ENCODE measurements at regions of chr13 and their contacts with region 1.

Region 1: DNA sequence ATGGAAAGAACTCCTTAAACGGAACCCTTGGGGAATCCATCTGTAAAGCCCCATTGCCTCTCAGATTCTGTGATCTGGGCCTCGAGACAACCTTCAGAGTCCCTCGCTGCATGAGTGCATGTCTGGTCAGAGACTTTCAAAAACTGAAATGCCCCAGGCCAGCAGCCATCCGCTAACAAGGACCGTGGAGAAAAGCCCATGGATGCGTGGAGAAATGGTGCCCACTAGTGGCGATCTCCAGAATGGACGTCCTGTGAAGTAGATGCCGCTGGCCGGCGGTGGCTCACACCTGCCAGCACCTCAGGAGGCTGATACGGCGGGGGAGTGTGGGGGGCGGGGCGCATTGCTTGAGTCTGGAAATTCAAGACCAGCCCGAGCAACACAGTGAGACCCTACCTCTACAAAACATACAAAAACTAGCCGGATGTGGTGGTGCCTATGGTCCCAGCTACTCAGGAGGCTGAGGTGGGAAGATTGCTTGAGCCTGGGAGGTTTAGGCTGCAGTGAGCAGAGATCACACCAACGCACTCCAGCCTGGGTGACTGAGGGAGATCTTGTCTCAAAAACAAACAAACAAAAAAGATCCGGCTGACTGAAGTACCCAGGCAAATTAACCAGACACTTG is 7.9 kb upstream of the CDC16 start:
- DNase-seq: peak; percentile 74
- ATAC-seq: peak; percentile 94
- H3K4me3 Mint-ChIP-seq: no peak overlapping the region
- H3K27ac Mint-ChIP-seq: no peak overlapping the region
- H3K4me1 Mint-ChIP-seq: peaks cover 19% of the 10 kb centered on the region
- H3K27me3 Mint-ChIP-seq: peaks cover 14% of the 10 kb centered on the region
- CTCF ChIP-seq: no peak

Region 2: DNA sequence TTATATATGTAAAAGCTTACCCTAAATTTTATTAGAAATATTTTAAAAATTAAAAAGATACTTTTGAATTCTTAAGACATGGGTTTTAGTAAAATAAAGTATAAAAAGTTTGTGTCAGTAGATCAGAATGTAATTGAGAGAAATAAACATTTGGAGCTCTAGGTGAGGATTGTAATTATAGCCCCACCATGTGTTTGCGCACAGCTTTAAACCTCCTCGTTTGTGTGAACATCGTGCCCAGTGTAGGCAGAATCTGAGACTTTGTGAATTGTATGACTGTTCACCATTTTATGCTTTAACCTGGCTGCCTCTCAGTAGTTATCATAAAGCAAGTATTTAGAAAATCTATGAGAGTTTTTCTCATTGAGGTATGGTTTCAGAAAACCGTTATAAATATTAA is 988.3 kb before region 1 on chr13:
- CTCF ChIA-PET with region 1: no interaction called
- POLR2A ChIA-PET with region 1: no interaction called
- intact Hi-C with region 1: no loop called
- DNase-seq: no peak
- ATAC-seq: no peak
- H3K4me3 Mint-ChIP-seq: no peak overlapping the region
- H3K27ac Mint-ChIP-seq: no peak overlapping the region
- H3K4me1 Mint-ChIP-seq: no peaks in the 10 kb centered on the region
- H3K27me3 Mint-ChIP-seq: no peaks in the 10 kb centered on the region
- CTCF ChIP-seq: no peak

Region 3: GRCh38 chr13:113863436-113864272 is 363.2 kb before region 1 on chr13 and contains the start of gene GAS6:
- CTCF ChIA-PET with region 1: no interaction called
- POLR2A ChIA-PET with region 1: no interaction called
- intact Hi-C with region 1: loop called (anchors 5 kb)
- DNase-seq: no peak
- ATAC-seq: peak; percentile 62
- H3K4me3 Mint-ChIP-seq: peak within 1 kb of the TSS; percentile 73
- H3K27ac Mint-ChIP-seq: no peak within 1 kb of the TSS
- H3K4me1 Mint-ChIP-seq: peaks cover 16% of the 10 kb centered on the region
- H3K27me3 Mint-ChIP-seq: peaks cover 35% of the 10 kb centered on the region
- CTCF ChIP-seq: no peak
- total RNA-seq, gene GAS6: 1.3 and 1.4 TPM in 2 replicates

Region 4: DNA sequence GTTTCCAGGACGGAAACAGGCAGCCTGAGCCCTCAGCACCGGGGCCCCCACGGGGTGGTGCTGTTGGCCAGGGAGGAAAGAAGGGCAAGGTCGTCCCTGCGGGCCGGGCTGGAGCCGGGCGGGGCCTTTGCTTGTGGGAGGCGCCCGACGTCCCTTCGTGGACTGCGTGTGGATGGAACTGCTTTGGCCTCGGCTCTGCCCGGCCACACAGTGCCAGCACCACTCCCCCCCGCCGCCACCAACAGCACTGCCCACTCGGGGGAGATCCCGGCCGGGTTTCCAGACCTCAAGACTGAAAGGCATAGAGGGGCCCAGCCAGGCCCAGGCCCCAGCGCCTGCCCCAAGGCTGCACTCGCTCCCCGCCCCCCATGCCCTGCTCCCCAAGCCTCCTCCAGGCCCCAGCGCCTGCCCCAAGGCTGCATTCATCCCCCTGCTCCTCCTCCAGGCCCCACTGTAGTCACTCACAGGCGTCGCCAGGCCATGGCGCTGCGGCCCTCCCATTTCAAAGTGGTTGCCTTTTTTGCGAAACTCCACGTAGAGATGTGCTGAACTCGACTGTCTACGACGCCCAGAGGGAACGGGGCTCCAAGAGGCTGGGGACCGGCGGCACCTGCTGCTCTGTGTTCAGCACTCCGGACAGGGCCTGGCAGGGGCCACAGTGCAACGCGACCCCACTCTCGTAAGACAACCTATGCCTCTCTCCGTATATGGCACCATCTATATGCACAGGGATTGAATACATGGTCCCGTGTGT is 275.4 kb before region 1 on chr13:
- CTCF ChIA-PET with region 1: interaction called, 14 read pairs
- POLR2A ChIA-PET with region 1: no interaction called
- intact Hi-C with region 1: loop called (anchors 1 kb)
- DNase-seq: peak; percentile 60
- ATAC-seq: peak; percentile 95
- H3K4me3 Mint-ChIP-seq: peak overlapping the region; percentile 32
- H3K27ac Mint-ChIP-seq: no peak overlapping the region
- H3K4me1 Mint-ChIP-seq: peaks cover 17% of the 10 kb centered on the region
- H3K27me3 Mint-ChIP-seq: no peaks in the 10 kb centered on the region
- CTCF ChIP-seq: peak; percentile 41

Region 5: DNA sequence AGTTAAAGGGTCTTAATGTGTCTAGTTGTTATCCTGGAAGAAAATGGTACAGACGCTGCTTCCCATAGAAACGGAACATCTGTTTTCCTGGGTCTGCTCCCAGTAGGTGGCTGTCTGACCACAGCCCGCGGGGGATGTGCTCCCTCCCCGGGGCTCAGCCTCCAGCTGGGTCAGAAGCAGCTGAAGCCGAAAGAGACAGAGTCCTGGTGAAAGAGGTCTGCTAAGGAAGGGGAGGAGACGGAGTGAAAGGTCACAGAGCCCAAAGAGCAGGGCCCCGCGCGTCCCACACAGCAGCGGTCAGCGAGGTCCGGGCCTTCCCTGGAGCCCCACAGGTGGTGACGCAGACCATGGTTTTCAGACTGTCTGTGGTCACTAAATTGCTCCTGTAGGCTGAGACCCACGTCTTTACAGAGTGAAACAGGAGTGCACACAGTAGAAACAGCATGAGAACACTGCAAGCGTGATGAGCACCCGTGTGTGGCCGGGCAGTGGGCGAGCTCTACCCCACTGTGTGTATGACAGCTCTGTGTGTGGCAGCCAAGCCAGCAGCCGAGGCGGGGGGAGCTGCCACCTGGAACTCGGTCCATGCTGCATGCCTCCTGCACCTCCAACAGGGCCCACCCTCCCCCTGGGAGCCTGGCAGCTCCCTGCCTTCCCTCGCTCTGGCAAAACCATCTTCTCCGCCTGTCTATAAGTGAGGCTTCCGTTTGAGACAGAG is 200.9 kb before region 1 on chr13:
- CTCF ChIA-PET with region 1: no interaction called
- POLR2A ChIA-PET with region 1: interaction called, 3 read pairs
- intact Hi-C with region 1: loop called (anchors 5 kb)
- DNase-seq: no peak
- ATAC-seq: no peak
- H3K4me3 Mint-ChIP-seq: no peak overlapping the region
- H3K27ac Mint-ChIP-seq: peak overlapping the region; percentile 78
- H3K4me1 Mint-ChIP-seq: peaks cover 68% of the 10 kb centered on the region
- H3K27me3 Mint-ChIP-seq: no peaks in the 10 kb centered on the region
- CTCF ChIP-seq: no peak

Region 6: DNA sequence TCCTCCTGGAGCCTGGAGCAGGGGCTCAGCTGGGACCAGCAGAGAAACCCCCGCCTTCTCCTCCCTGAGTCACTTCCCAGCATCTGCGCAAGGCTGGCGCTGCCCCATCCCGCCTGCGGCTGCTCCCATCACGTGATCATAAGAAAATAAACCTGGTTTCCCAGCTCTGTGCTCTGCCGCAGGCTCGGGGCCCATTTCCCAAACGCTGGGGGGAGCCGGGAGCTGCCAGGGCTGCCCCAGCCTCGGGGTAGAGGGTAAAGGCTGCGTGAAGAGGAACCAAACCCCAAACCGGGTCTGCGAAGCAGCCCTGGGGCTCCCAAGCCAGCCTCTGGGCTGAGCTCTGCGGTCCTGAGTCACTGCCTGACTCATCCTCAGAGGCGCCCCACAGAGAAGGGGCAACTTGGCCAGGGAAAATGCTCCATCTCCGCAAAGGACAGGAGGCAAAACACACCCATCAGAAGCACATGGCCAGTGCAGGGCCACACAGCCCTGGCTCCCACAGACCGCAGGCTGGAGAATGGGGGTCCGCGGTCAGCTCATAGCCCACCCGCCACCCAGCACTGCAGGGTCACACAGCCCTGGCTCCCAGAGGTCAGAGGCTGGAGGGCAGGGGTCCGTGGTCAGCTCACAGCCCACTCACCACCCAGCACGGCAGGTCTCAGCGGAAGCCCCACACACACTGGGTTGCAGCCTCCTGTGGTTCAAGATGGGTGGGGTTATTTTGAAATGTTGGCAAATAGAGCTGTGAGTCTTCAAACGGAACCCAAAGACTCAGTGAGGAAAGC is 161.5 kb before region 1 on chr13:
- CTCF ChIA-PET with region 1: no interaction called
- POLR2A ChIA-PET with region 1: interaction called, 3 read pairs
- intact Hi-C with region 1: loop called (anchors 5 kb)
- DNase-seq: peak; percentile 61
- ATAC-seq: peak; percentile 81
- H3K4me3 Mint-ChIP-seq: peak overlapping the region; percentile 82
- H3K27ac Mint-ChIP-seq: peak overlapping the region; percentile 91
- H3K4me1 Mint-ChIP-seq: peaks cover 68% of the 10 kb centered on the region
- H3K27me3 Mint-ChIP-seq: no peaks in the 10 kb centered on the region
- CTCF ChIP-seq: no peak

Region 7: DNA sequence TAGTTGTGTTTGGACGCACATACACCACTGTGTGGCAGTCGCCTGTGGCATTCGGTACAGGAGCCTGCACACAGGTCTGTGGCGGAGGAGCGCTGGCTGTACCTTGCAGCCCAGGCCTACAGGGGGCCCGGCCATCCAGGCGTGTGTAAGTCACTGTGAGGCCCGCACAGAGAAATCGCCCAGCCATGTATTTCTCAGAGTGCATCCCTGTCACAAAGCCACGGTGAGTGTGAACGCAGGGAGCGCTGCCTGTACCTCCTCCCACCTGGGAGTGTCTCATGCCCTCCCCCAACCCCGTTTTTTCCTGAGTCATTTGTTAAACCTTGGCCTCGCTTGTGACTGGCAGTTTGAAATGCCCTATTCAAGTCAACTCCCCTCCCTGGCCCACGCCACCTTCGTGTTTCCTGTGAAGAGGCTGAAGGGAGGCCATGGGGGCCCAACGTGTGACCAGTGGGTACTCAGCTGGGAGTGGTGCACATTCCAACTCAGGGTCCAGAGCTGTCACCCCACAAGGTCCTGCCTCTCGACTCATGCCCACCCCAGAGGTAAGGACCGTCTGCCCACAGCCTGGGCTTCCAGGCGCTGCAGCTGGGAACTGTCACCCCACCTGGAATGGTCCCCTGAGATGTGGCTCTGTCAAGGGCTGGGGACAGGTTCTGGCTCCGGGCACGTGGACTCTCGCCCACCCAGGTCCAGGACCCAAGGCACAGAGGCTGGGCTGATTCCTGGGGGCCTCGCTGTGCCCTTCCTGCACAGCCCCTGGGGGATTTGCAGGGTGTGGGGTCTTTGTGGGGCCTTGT is 82.8 kb before region 1 on chr13:
- CTCF ChIA-PET with region 1: interaction called, 7 read pairs
- POLR2A ChIA-PET with region 1: no interaction called
- intact Hi-C with region 1: loop called (anchors 1 kb)
- DNase-seq: peak; percentile 45
- ATAC-seq: peak; percentile 66
- H3K4me3 Mint-ChIP-seq: no peak overlapping the region
- H3K27ac Mint-ChIP-seq: peak overlapping the region; percentile 26
- H3K4me1 Mint-ChIP-seq: peaks cover 13% of the 10 kb centered on the region
- H3K27me3 Mint-ChIP-seq: no peaks in the 10 kb centered on the region
- CTCF ChIP-seq: no peak